ENCODE measurements at regions of chr2 and their contacts with region 1.

Region 1: GRCh38 chr2:15577071-15577735 is 14.5 kb upstream of the DDX1 start:
- DNase-seq: peak; percentile 57 to 91 (median 82)
- ATAC-seq: peak; percentile 92 to 99 (median 95)
- H3K4me3 ChIP-seq: no peak overlapping the region
- H3K4me3 Mint-ChIP-seq: no peak overlapping the region
- H3K27ac ChIP-seq: no peak overlapping the region
- H3K27ac Mint-ChIP-seq: no peak overlapping the region
- H3K4me1 ChIP-seq: peaks cover 0 to 2% of the 10 kb centered on the region in 2 experiments
- H3K4me1 Mint-ChIP-seq: no peaks in the 10 kb centered on the region
- H3K27me3 ChIP-seq: peaks cover 0 to 3% of the 10 kb centered on the region in 2 experiments
- H3K27me3 Mint-ChIP-seq: peaks cover 5 to 9% of the 10 kb centered on the region in 2 donors

Region 2: GRCh38 chr2:15594291-15595256 is 17.4 kb after region 1 on chr2:
- CTCF ChIA-PET with region 1: interaction called, 7 to 12 read pairs
- POLR2A ChIA-PET with region 1: interaction called in 1 of 2 experiments, 3 read pairs
- DNase-seq: no peak
- ATAC-seq: no peak
- H3K4me3 ChIP-seq: no peak overlapping the region
- H3K4me3 Mint-ChIP-seq: no peak overlapping the region
- H3K27ac ChIP-seq: no peak overlapping the region
- H3K27ac Mint-ChIP-seq: no peak overlapping the region
- H3K4me1 ChIP-seq: peaks cover 10 to 16% of the 10 kb centered on the region in 2 experiments
- H3K4me1 Mint-ChIP-seq: peaks cover 37 to 45% (median 40%) of the 10 kb centered on the region in 3 donors
- H3K27me3 ChIP-seq: no peaks in the 10 kb centered on the region
- H3K27me3 Mint-ChIP-seq: no peaks in the 10 kb centered on the region

Region 3: DNA sequence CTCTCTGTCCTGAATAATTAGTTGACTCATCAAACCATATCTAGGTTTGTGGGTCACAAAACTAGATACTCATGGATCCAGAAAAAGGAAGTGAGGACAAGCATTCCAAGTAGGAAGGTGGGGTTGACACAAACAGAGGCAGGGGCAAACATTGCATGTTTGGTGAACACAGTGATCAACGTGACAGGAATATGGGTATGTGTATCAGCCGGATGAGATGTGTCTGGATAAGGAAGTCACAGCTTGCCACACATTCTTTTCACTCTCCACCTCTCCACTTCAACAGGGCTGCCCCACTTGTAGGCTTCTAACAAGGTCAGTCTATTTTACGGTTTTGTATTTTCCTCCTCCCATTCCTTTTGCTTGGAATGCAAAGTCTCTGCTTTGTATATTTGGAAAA is 769.5 kb after region 1 on chr2:
- CTCF ChIA-PET with region 1: interaction called in 1 of 2 experiments, 12 read pairs
- POLR2A ChIA-PET with region 1: no interaction called
- DNase-seq: no peak
- ATAC-seq: no peak
- H3K4me3 ChIP-seq: no peak overlapping the region
- H3K4me3 Mint-ChIP-seq: no peak overlapping the region
- H3K27ac ChIP-seq: no peak overlapping the region
- H3K27ac Mint-ChIP-seq: no peak overlapping the region
- H3K4me1 ChIP-seq: no peaks in the 10 kb centered on the region
- H3K4me1 Mint-ChIP-seq: no peaks in the 10 kb centered on the region
- H3K27me3 ChIP-seq: no peaks in the 10 kb centered on the region
- H3K27me3 Mint-ChIP-seq: peaks cover 0 to 7% of the 10 kb centered on the region in 2 donors